Naive thymus-derived CD4-positive, alpha-beta T cell (primary cell): ENCODE measurements at regions of chr14 and their contacts with region 1.

Region 1: DNA sequence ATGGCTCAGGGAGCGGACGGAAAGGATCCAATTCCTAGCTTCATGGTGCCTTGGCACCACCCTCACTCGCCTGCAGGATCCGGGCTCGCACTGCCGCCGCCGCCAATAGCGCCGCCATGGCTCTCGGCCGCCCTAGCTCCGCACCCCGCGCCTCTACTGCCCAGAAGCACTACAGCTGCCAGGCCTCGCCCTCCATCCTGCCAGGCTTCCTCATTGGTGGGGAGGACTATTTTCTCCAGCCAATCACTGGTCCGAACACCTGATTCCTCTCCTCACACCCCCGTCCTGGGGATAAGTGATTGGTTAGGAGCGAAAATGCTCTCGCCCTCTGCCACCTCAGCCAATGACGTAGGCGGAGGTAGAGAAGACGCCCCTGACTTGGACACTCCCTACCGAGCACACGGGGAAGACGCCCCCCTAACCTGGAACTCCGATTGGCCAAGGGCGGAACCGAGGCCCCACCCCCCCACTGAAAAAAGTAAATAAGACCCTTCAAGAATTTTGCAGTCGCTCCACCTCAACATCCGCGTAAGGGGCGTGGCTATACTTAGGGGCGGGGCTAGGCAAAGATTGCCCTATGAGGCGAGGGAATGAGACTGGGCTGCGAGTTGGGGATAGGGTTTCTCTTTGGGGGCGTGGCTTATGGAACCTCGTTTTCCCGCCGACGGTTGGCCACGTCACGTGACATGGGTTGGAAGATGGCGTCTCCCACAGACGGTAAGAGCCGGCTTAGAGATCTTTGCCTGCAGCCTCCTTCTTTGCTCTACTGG is at the starts of genes ALDH6A1 and LIN52:
- DNase-seq: peak; percentile 90 to 100 (median 100)
- ATAC-seq: peak; percentile 92
- H3K4me3 ChIP-seq: peak within 1 kb of the TSS; percentile 78
- H3K4me3 Mint-ChIP-seq: peak within 1 kb of the TSS; percentile 89 to 100 (median 96)
- H3K27ac ChIP-seq: peak within 1 kb of the TSS; percentile 77
- H3K27ac Mint-ChIP-seq: peak within 1 kb of the TSS; percentile 90 to 99 (median 94)
- H3K4me1 ChIP-seq: peaks cover 10 to 16% of the 10 kb centered on the region in 2 donors
- H3K4me1 Mint-ChIP-seq: peaks cover 23 to 62% (median 44%) of the 10 kb centered on the region in 7 donors
- H3K27me3 ChIP-seq: no peaks in the 10 kb centered on the region
- H3K27me3 Mint-ChIP-seq: peaks cover 0 to 4% (median 0%) of the 10 kb centered on the region in 5 donors
- total RNA-seq, gene ALDH6A1: 8.9 to 23.7 (median 19.2) TPM
- total RNA-seq, gene LIN52: 6.6 to 16.3 (median 9.4) TPM

Region 2: DNA sequence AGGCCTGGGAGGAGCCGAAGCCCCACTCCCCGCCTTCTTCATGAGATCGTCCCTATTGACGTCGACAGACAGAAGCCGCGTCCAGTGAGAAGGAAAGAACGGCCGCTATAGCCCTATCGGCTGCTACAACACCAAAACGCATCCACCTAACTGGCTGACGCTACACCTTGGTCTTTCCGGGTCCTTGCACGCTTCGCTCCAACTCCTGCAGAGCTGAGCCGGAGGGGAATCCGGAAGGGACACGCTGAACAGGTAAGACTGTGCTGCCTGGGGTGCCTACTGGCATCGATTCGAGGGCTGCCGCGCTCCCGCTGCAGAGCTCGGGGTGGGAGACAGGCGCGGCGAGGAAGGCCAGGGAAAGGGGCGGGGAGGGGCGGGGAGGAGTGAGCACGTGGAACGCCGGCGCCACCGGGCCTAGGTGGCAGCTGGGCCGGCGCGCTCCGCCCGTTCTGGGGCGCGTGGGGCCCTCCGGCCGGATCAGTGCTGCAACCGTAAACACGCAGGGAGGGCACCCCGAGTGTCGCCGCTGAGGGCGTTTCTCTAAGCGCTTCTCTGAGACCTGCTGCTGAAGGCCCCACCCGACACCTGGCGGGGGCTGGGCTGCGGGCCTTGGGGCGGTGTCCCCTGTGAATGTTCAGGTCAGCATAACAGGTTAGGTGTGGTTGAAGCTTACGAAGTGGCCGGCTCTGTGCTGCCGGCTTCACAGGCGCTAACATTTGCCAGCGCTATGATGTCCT is 1158.0 kb before region 1 on chr14 and contains the start of gene DCAF4:
- CTCF ChIA-PET with region 1: no interaction called
- POLR2A ChIA-PET with region 1: no interaction called
- intact Hi-C with region 1: loop called (anchors 1 to 2 kb)
- DNase-seq: peak; percentile 67 to 96 (median 92)
- ATAC-seq: peak; percentile 96
- H3K4me3 ChIP-seq: peak within 1 kb of the TSS; percentile 64
- H3K4me3 Mint-ChIP-seq: peak within 1 kb of the TSS; percentile 93 to 99 (median 96)
- H3K27ac ChIP-seq: peak within 1 kb of the TSS; percentile 74
- H3K27ac Mint-ChIP-seq: peak within 1 kb of the TSS; percentile 58 to 96 (median 95)
- H3K4me1 ChIP-seq: peaks cover 0 to 3% of the 10 kb centered on the region in 2 donors
- H3K4me1 Mint-ChIP-seq: peaks cover 2 to 27% (median 11%) of the 10 kb centered on the region in 7 donors
- H3K27me3 ChIP-seq: no peaks in the 10 kb centered on the region
- H3K27me3 Mint-ChIP-seq: peaks cover 0 to 21% (median 0%) of the 10 kb centered on the region in 5 donors
- total RNA-seq, gene DCAF4: 17.6 to 37.8 (median 21.8) TPM

Region 3: GRCh38 chr14:73136387-73137225 is 947.9 kb before region 1 on chr14 and contains the start of gene PSEN1:
- CTCF ChIA-PET with region 1: no interaction called
- POLR2A ChIA-PET with region 1: no interaction called
- intact Hi-C with region 1: loop called in 1 of 2 experiments (anchors 2 kb)
- DNase-seq: peak; percentile 97 to 100 (median 98)
- ATAC-seq: peak; percentile 96
- H3K4me3 ChIP-seq: peak within 1 kb of the TSS; percentile 93
- H3K4me3 Mint-ChIP-seq: peak within 1 kb of the TSS; percentile 82 to 99 (median 91)
- H3K27ac ChIP-seq: peak within 1 kb of the TSS; percentile 98
- H3K27ac Mint-ChIP-seq: peak within 1 kb of the TSS; percentile 71 to 99 (median 96)
- H3K4me1 ChIP-seq: peaks cover 7 to 17% of the 10 kb centered on the region in 2 donors
- H3K4me1 Mint-ChIP-seq: peaks cover 17 to 39% (median 36%) of the 10 kb centered on the region in 7 donors
- H3K27me3 ChIP-seq: no peaks in the 10 kb centered on the region
- H3K27me3 Mint-ChIP-seq: no peaks in the 10 kb centered on the region
- total RNA-seq, gene PSEN1: 32.7 to 55.8 (median 49.3) TPM

Region 4: GRCh38 chr14:73568381-73568781 is 516.1 kb before region 1 on chr14:
- CTCF ChIA-PET with region 1: no interaction called
- POLR2A ChIA-PET with region 1: no interaction called
- intact Hi-C with region 1: loop called in 1 of 2 experiments (anchors 1 kb)
- DNase-seq: no peak
- ATAC-seq: no peak
- H3K4me3 ChIP-seq: peak overlapping the region; percentile 73
- H3K4me3 Mint-ChIP-seq: peak overlapping the region; percentile 92 to 97 (median 94)
- H3K27ac ChIP-seq: peak overlapping the region; percentile 77
- H3K27ac Mint-ChIP-seq: peak overlapping the region; percentile 92 to 98 (median 95)
- H3K4me1 ChIP-seq: peaks cover 21% of the 10 kb centered on the region in 2 donors
- H3K4me1 Mint-ChIP-seq: peaks cover 29 to 52% (median 44%) of the 10 kb centered on the region in 7 donors
- H3K27me3 ChIP-seq: no peaks in the 10 kb centered on the region
- H3K27me3 Mint-ChIP-seq: no peaks in the 10 kb centered on the region

Region 5: GRCh38 chr14:73785873-73786695 is 298.4 kb before region 1 on chr14:
- CTCF ChIA-PET with region 1: no interaction called
- POLR2A ChIA-PET with region 1: no interaction called
- intact Hi-C with region 1: loop called in 1 of 2 experiments (anchors 1 kb)
- DNase-seq: peak; percentile 41 to 65 (median 60)
- ATAC-seq: peak; percentile 74
- H3K4me3 ChIP-seq: peak overlapping the region; percentile 91
- H3K4me3 Mint-ChIP-seq: peak overlapping the region; percentile 87 to 99 (median 97)
- H3K27ac ChIP-seq: peak overlapping the region; percentile 96
- H3K27ac Mint-ChIP-seq: peak overlapping the region; percentile 92 to 97 (median 94)
- H3K4me1 ChIP-seq: peaks cover 45% of the 10 kb centered on the region in 2 donors
- H3K4me1 Mint-ChIP-seq: peaks cover 50 to 73% (median 66%) of the 10 kb centered on the region in 7 donors
- H3K27me3 ChIP-seq: no peaks in the 10 kb centered on the region
- H3K27me3 Mint-ChIP-seq: no peaks in the 10 kb centered on the region

Region 6: DNA sequence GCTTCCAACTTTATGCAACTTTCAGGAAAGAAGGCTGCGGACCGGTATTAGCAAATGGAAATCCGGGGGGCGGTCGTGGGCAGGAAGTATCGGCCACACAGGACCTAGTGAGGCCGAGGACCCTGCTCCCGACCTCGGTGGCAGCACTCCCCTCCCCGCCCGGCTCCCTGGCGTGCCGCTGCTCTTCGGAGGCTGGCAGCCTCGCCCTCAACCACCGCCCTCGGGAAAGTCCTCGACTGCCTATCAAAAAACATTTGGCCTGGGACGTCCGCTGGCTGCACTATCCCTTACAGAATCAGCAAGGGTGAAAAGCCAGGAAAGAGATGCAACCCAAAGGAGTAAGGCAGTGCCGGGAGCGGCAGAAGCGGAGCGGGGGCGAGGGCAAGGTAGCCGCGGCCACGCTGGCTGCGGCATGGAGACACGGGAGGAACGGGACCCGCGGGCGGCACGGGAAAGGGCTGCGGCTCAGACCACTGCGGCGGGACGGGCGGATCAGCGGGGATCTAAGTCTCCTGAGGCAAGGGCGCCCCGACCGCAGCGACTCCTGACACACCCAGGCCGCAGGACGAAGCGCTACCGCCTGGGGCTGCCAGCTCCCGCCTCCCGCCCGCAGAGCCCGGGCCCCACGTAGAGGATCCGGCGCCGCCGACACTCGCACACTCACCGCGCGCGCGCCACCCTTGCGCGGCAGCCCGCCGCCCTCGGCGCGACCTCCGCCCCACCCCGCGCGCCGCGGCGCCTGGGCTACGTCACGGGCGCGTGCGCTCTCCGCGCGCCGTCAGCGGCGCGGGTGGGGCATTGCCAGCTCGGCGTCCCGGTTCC is 65.7 kb before region 1 on chr14 and contains the starts of genes BBOF1 and ENTPD5:
- CTCF ChIA-PET with region 1: no interaction called
- POLR2A ChIA-PET with region 1: interaction called, 3 read pairs
- intact Hi-C with region 1: loop called (anchors 1 kb)
- DNase-seq: peak; percentile 83 to 89 (median 88)
- ATAC-seq: peak; percentile 98
- H3K4me3 ChIP-seq: peak within 1 kb of the TSS; percentile 79
- H3K4me3 Mint-ChIP-seq: peak within 1 kb of the TSS; percentile 80 to 97 (median 94)
- H3K27ac ChIP-seq: peak within 1 kb of the TSS; percentile 93
- H3K27ac Mint-ChIP-seq: peak within 1 kb of the TSS; percentile 89 to 98 (median 96)
- H3K4me1 ChIP-seq: peaks cover 6 to 10% of the 10 kb centered on the region in 2 donors
- H3K4me1 Mint-ChIP-seq: peaks cover 7 to 24% (median 14%) of the 10 kb centered on the region in 7 donors
- H3K27me3 ChIP-seq: no peaks in the 10 kb centered on the region
- H3K27me3 Mint-ChIP-seq: peaks cover 0 to 2% (median 0%) of the 10 kb centered on the region in 5 donors
- total RNA-seq, gene BBOF1: 0.80 to 4.0 (median 2.6) TPM
- total RNA-seq, gene ENTPD5: 8.6 to 17.1 (median 11.2) TPM

Region 7: GRCh38 chr14:75176142-75176820 is 1091.8 kb after region 1 on chr14 and contains the start of gene TMED10:
- CTCF ChIA-PET with region 1: no interaction called
- POLR2A ChIA-PET with region 1: no interaction called
- intact Hi-C with region 1: loop called in 1 of 2 experiments (anchors 10 kb)
- DNase-seq: peak; percentile 86 to 96 (median 94)
- ATAC-seq: peak; percentile 84
- H3K4me3 ChIP-seq: peak within 1 kb of the TSS; percentile 93
- H3K4me3 Mint-ChIP-seq: peak within 1 kb of the TSS; percentile 77 to 96 (median 91)
- H3K27ac ChIP-seq: peak within 1 kb of the TSS; percentile 98
- H3K27ac Mint-ChIP-seq: peak within 1 kb of the TSS; percentile 95 to 99 (median 97)
- H3K4me1 ChIP-seq: peaks cover 27 to 33% of the 10 kb centered on the region in 2 donors
- H3K4me1 Mint-ChIP-seq: peaks cover 27 to 60% (median 53%) of the 10 kb centered on the region in 7 donors
- H3K27me3 ChIP-seq: no peaks in the 10 kb centered on the region
- H3K27me3 Mint-ChIP-seq: peaks cover 0 to 7% (median 0%) of the 10 kb centered on the region in 5 donors
- total RNA-seq, gene TMED10: 155 to 233 (median 171) TPM